Pancreas (tissue), 10 donors: ENCODE measurements at regions of chr18 and their contacts with region 1.

Region 1: DNA sequence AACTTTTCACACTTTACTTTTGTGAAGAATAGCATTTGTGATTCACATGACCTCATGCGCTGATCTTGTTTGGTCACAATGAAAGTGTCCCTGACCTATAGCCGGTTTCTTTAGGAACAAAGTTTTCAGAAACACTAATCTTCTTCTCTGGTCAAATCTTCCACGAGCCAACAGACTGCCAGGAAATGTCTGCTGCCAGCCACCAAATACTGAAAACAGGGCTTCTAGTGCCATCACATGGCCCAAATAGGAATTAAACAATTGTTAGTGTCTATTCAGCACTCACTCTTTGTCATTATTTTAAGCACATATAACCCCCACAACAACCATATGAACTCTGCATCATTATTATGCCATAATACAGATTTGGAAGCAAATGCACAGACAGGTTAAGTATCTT is 286.5 kb upstream of the SYT4 start:
- DNase-seq: peak in 4 of 6 donors; percentile 7 to 44 (median 28)
- ATAC-seq: peak; percentile 83 to 99 (median 96)
- H3K4me3 ChIP-seq: no peak overlapping the region
- H3K27ac ChIP-seq: no peak overlapping the region
- H3K4me1 ChIP-seq: no peaks in the 10 kb centered on the region
- H3K27me3 ChIP-seq: no peaks in the 10 kb centered on the region
- CTCF ChIP-seq: peak in 3 of 4 donors; percentile 13 to 45 (median 22)

Region 2: GRCh38 chr18:42305869-42306593 is 1257.7 kb before region 1 on chr18:
- intact Hi-C with region 1: loop called in 1 of 3 experiments (anchors 10 kb)
- DNase-seq: no peak
- ATAC-seq: no peak
- H3K4me3 ChIP-seq: no peak overlapping the region
- H3K27ac ChIP-seq: no peak overlapping the region
- H3K4me1 ChIP-seq: no peaks in the 10 kb centered on the region
- H3K27me3 ChIP-seq: no peaks in the 10 kb centered on the region
- CTCF ChIP-seq: no peak

Region 3: GRCh38 chr18:43283299-43283698 is 280.5 kb before region 1 on chr18:
- intact Hi-C with region 1: loop called in 1 of 3 experiments (anchors 10 kb)
- DNase-seq: no peak
- ATAC-seq: no peak
- H3K4me3 ChIP-seq: no peak overlapping the region
- H3K27ac ChIP-seq: no peak overlapping the region
- H3K4me1 ChIP-seq: no peaks in the 10 kb centered on the region
- H3K27me3 ChIP-seq: peaks cover 0 to 9% (median 0%) of the 10 kb centered on the region in 4 donors
- CTCF ChIP-seq: no peak